ENCODE measurements at regions of chr1 and their contacts with region 1.

Region 1: DNA sequence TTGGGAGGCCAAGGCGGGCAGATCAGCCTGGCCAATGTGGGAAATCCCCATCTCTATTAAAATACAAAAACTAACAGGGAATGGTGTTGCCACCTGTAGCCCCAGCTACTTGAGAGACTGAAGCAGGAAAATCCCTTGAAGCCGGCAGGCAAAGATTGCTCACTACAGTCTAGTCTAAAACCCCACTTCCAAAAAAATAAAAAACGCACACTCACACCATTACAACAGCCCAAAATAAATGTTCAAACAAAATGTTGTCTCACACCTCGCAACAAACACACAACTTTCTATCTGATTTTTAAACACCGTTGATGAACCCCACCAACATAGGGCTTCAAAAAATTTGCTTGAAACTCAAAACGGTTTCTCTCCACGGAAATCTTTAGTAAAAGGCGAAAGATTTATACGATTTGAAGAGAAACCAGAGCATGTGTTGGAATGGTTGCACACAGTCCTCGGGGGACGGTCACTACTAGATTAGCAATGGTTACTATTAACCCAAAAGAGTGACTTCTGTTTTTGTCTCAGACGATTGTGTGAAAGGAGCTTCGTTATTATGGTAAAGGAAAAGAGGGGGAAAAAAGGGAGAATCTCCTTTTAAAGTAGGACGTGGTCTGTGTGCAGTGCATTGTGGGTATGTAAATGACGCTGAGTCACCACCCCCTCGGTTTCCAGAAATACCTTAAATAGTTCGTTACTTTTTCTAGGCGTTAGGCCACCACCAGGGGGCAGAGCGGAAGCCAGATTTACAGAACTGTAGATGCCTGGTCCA is at the start of gene RNU5D-1:
- DNase-seq: peak; percentile 88 to 94 (median 90)
- H3K4me3 ChIP-seq: peak within 1 kb of the TSS; percentile 37
- H3K4me3 Mint-ChIP-seq: peak within 1 kb of the TSS; percentile 63 to 86 (median 78)
- H3K27ac ChIP-seq: peak within 1 kb of the TSS; percentile 97
- H3K27ac Mint-ChIP-seq: peak within 1 kb of the TSS; percentile 96 to 100 (median 100)
- H3K4me1 ChIP-seq: peaks cover 14% of the 10 kb centered on the region
- H3K4me1 Mint-ChIP-seq: peaks cover 19 to 36% (median 28%) of the 10 kb centered on the region in 3 donors
- H3K27me3 ChIP-seq: no peaks in the 10 kb centered on the region
- H3K27me3 Mint-ChIP-seq: no peaks in the 10 kb centered on the region
- total RNA-seq, gene RNU5D-1: not detected

Region 2: DNA sequence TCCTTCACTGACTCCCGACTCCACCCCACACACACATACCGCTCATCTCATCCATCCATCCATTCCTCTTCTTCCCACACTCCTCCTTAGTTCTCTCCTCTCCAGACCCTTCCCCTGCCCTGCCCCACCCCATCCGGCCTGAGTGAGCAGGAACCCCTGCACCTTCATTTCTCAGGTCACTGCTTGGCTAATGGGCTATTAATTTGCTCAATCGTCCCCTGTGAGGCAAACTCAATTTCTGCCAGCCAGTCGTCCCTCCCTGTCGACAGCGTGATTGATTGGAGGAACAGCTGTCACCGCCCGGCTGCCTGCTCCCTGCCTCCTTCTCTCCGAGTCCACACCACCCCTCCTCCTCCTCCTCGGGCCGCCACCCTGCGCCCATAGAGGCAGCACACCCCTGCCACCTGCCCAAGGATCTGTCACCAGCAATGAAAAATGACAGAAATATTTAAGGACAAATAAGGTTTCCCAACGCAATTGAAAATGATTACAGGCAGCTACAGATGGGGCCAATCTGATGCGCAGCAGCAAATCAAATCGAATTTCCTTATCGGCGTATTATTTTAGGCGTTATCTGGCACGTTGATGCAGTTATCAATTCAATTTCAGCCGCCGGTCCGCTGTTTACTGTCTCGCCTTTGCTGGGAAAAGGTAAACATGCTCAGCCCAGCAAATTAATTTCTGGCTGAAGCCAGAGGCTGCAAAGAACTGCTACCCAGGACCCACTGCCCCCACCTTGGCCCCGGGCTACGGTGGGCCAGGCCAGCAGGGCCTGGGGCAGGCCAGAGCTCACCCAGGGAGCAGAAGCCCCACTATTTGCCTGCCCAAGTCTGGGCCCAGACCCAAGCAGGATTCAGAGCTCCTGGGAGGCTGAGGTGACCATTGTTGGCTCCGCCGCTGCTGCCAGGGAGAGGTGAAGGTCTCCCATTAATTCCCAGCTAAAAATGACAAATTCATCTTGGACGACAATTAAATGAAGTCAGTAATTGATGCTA is 128.0 kb before region 1 on chr1:
- CTCF ChIA-PET with region 1: no interaction called
- POLR2A ChIA-PET with region 1: no interaction called
- DNase-seq: no peak
- H3K4me3 ChIP-seq: no peak overlapping the region
- H3K4me3 Mint-ChIP-seq: no peak overlapping the region
- H3K27ac ChIP-seq: no peak overlapping the region
- H3K27ac Mint-ChIP-seq: peak overlapping the region in 1 of 8 donors; percentile 77
- H3K4me1 ChIP-seq: no peaks in the 10 kb centered on the region
- H3K4me1 Mint-ChIP-seq: no peaks in the 10 kb centered on the region
- H3K27me3 ChIP-seq: no peaks in the 10 kb centered on the region
- H3K27me3 Mint-ChIP-seq: peaks cover 0 to 6% of the 10 kb centered on the region in 2 donors

Region 3: DNA sequence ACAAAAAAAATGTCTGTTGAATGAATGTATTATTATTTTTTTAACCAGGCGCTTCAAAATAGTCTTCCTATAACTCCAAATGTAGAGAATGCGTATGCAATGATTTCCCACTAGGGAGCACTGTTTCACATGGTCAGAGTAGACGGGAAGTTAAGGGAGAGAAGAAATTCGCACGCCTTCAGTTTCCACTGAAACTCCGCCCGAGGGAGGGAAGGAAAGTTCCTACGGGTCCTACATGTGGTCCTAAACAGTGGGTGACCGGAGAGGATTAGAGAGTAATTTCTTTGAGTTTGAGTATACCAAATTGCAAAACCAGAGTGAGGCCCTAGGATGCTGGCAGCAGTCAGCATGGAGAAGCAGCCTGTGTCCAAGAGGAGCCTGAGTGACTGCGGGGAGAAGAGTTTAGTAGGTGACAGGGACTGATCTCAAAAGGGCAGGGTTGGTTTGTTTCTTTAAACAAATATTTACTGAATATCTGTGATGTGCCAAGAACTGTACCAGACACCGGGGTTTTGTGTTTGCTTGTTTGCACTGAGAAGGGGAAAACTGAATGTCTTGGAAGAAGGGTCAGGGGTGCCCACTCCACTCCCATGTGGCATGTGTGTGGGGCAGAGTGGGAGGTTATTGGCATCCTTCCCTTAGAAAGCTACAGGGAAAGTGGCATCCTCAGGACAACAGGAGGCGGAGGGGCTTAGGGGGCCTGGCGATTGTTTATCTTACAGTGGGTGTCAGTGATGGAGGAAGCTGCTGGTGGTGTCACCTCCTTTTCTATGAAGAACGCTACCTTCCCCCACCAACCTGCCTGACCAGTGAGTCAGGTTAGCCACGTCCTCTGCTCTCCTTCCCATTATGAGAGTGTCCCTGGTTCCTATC is 22.7 kb before region 1 on chr1:
- CTCF ChIA-PET with region 1: interaction called, 89 read pairs
- POLR2A ChIA-PET with region 1: no interaction called
- DNase-seq: peak in 1 of 5 donors; percentile 52
- H3K4me3 ChIP-seq: peak overlapping the region; percentile 24
- H3K4me3 Mint-ChIP-seq: peak overlapping the region in 6 of 7 donors; percentile 33 to 48 (median 38)
- H3K27ac ChIP-seq: no peak overlapping the region
- H3K27ac Mint-ChIP-seq: peak overlapping the region in 6 of 8 donors; percentile 3 to 88 (median 36)
- H3K4me1 ChIP-seq: peaks cover 10% of the 10 kb centered on the region
- H3K4me1 Mint-ChIP-seq: peaks cover 6 to 8% (median 7%) of the 10 kb centered on the region in 3 donors
- H3K27me3 ChIP-seq: no peaks in the 10 kb centered on the region
- H3K27me3 Mint-ChIP-seq: peaks cover 0 to 3% of the 10 kb centered on the region in 2 donors

Region 4: GRCh38 chr1:44714944-44715571 is 15.9 kb before region 1 on chr1:
- CTCF ChIA-PET with region 1: interaction called, 89 read pairs
- POLR2A ChIA-PET with region 1: interaction called, 9 read pairs
- DNase-seq: peak; percentile 48 to 77 (median 68)
- H3K4me3 ChIP-seq: no peak overlapping the region
- H3K4me3 Mint-ChIP-seq: peak overlapping the region in 5 of 7 donors; percentile 63 to 85 (median 71)
- H3K27ac ChIP-seq: no peak overlapping the region
- H3K27ac Mint-ChIP-seq: peak overlapping the region; percentile 29 to 91 (median 74)
- H3K4me1 ChIP-seq: peaks cover 33% of the 10 kb centered on the region
- H3K4me1 Mint-ChIP-seq: peaks cover 30 to 46% (median 42%) of the 10 kb centered on the region in 3 donors
- H3K27me3 ChIP-seq: no peaks in the 10 kb centered on the region
- H3K27me3 Mint-ChIP-seq: no peaks in the 10 kb centered on the region

Region 5: GRCh38 chr1:44903011-44903680 is 172.2 kb after region 1 on chr1:
- CTCF ChIA-PET with region 1: no interaction called
- POLR2A ChIA-PET with region 1: no interaction called
- DNase-seq: no peak
- H3K4me3 ChIP-seq: no peak overlapping the region
- H3K4me3 Mint-ChIP-seq: no peak overlapping the region
- H3K27ac ChIP-seq: no peak overlapping the region
- H3K27ac Mint-ChIP-seq: no peak overlapping the region
- H3K4me1 ChIP-seq: no peaks in the 10 kb centered on the region
- H3K4me1 Mint-ChIP-seq: peaks cover 0 to 5% (median 0%) of the 10 kb centered on the region in 3 donors
- H3K27me3 ChIP-seq: no peaks in the 10 kb centered on the region
- H3K27me3 Mint-ChIP-seq: no peaks in the 10 kb centered on the region

Measured in CD8-positive, alpha-beta memory T cell (primary cell).